Dorsolateral prefrontal cortex (tissue), 120 donors: ENCODE measurements at regions of chr1 and their contacts with region 1.

Region 1: DNA sequence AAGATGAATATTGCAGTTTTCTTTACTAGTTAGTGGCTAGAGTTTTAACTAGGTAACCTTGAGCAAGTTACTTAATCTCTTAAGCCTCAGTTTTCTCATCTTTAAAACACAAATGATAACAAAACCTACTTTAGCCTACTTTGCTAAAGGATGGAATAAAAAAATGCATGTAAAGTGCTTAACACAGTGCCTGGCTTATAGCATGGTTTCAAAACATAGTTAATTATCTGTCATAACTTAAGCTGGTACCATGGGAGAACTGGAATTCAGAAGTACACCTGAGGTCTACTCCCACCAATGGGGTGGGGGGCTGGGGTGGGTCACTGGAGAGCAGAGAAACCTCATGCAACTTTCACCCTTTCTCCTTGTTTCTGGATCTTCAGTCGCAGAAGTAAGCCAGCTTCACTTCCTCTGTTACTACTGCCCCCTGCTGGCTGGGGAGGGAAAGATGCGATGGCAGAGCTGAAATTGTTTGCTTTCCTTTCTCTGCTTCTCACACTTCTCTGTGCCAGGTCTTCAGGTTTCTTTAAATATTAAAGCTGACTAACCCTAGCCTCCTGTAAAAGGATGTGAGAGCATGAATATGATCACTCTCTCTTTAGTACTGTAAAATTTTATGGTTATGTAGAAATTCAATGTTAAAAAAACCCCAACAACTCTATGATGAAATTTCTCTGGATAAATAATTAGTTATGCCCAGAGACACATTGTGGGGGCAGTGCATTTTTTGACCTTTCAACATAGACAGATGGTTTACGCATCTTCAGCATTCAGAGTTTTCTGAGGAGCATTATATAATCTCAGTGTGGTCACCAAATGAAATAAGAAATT is 324.2 kb downstream of the HLX start:
- DNase-seq: peak; percentile 30 to 73 (median 58)
- H3K4me3 ChIP-seq: no peak overlapping the region
- H3K27ac ChIP-seq: no peak overlapping the region
- H3K27me3 ChIP-seq: peaks cover 0 to 10% (median 0%) of the 10 kb centered on the region in 45 donors
- CTCF ChIP-seq: peak; percentile 73 to 90 (median 83)

Region 2: GRCh38 chr1:220879076-220879508 is 324.3 kb before region 1 on chr1 and contains the start of gene HLX:
- intact Hi-C with region 1: loop called (anchors 5 to 10 kb)
- DNase-seq: peak in 6 of 10 donors; percentile 41 to 68 (median 53)
- H3K4me3 ChIP-seq: peak within 1 kb of the TSS; percentile 45 to 87 (median 75)
- H3K27ac ChIP-seq: peak within 1 kb of the TSS in 53 of 59 donors; percentile 29 to 92 (median 80)
- H3K27me3 ChIP-seq: peaks cover 0 to 63% (median 27%) of the 10 kb centered on the region in 45 donors
- CTCF ChIP-seq: peak in 1 of 56 donors; percentile 8
- total RNA-seq, gene HLX: 0.25 to 5.3 (median 1.6) TPM

Region 3: GRCh38 chr1:221035680-221036153 is 167.7 kb before region 1 on chr1:
- intact Hi-C with region 1: no loop called
- DNase-seq: no peak
- H3K4me3 ChIP-seq: no peak overlapping the region
- H3K27ac ChIP-seq: no peak overlapping the region
- H3K27me3 ChIP-seq: peaks cover 0 to 7% (median 0%) of the 10 kb centered on the region in 45 donors
- CTCF ChIP-seq: no peak

Region 4: GRCh38 chr1:221415626-221416025 is 212.2 kb after region 1 on chr1:
- intact Hi-C with region 1: no loop called
- DNase-seq: no peak
- H3K4me3 ChIP-seq: no peak overlapping the region
- H3K27ac ChIP-seq: no peak overlapping the region
- H3K27me3 ChIP-seq: peaks cover 0 to 7% (median 0%) of the 10 kb centered on the region in 45 donors
- CTCF ChIP-seq: no peak